K562 (cell line): ENCODE measurements at regions of chrX and their contacts with region 1.

Region 1: DNA sequence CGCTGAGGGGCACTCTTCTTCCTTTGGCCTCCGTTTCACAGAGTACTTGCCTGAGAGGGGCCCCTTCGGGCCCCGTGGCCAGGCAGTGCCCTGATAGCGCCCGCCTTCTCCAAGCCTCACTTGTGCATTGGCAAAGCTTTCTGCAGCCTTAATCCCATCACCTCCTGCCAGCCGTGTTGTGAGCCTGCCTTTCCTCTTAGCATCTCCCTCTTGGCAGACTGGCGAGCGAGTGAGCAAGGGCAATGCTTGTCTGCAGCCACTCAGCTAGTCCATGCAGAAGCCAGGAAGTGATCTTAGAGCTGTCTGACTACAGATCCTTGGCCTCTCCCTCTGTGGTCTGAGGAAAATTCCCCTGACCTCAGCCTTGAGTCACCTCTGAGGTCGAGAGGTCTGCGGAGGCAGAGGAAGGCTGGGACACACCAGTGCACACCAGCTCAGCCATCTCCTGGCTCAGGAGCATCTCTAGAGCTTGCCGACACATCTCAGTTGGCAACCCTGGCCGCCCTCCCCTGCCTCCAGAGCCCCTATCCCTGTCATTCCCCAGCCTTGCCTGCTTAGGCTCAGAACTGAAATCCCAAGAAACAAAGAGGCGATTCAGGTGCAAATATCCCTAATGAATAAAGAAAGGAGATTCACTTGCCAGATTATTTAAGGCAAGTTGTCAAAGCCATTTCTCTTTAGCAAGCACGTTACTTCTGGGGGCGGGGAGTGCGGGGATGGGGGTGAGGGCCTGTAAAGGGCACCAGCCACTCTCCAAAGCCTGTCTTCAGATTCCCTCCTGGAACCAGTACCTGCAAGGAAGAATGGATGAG is 143.5 kb upstream of the MAMLD1 start:
- DNase-seq: no peak
- ATAC-seq: no peak
- H3K4me3 ChIP-seq: no peak overlapping the region
- H3K27ac ChIP-seq: no peak overlapping the region
- H3K4me1 ChIP-seq: no peaks in the 10 kb centered on the region
- H3K27me3 ChIP-seq: peaks cover 0 to 32% of the 10 kb centered on the region in 2 experiments; a peak in 2 of 5 replicates
- CTCF ChIP-seq: no peak
- EP300 ChIP-seq: no peak
- POLR2A ChIP-seq: no peak
- RAD21 ChIP-seq: no peak

Region 2: DNA sequence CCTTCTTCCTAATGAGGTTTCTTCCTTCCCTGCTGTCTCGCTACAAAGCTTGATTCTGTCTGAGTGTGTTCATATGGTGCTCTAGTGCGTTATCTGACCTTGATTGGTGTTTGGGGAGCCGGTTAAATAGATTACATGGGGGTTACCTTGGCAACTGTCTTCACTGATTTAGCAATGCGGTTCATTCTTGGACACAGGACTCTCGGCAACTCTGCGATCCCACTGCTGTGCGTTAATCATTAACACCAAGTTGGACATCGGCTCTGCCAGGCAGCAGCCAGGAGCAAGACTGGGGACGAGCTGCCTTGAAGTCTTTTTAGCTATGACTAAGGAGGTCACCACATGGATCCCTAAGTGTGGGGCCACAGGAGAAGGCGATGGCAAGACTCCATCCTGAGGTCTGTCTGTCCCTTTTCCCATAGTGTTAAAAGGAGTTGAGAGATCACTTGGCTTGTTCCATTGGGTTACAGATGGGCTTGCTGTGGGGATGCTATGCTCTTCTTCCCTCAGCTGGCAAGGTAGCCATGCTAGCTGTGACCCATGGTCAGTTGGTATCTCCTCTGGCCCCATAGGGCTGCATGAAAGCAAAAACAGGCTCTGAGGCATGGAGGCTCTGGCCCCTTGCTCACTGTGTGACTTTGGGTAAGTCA is 50.1 kb after region 1 on chrX:
- CTCF ChIA-PET with region 1: no interaction called
- POLR2A ChIA-PET with region 1: no interaction called
- in situ Hi-C with region 1: no loop called
- intact Hi-C with region 1: no loop called
- DNase-seq: no peak
- ATAC-seq: no peak
- H3K4me3 ChIP-seq: no peak overlapping the region
- H3K27ac ChIP-seq: no peak overlapping the region
- H3K4me1 ChIP-seq: no peaks in the 10 kb centered on the region
- H3K27me3 ChIP-seq: peaks cover 0 to 6% of the 10 kb centered on the region in 2 experiments; a peak in 1 of 5 replicates
- CTCF ChIP-seq: no peak
- EP300 ChIP-seq: no peak
- POLR2A ChIP-seq: no peak
- RAD21 ChIP-seq: no peak

Region 3: DNA sequence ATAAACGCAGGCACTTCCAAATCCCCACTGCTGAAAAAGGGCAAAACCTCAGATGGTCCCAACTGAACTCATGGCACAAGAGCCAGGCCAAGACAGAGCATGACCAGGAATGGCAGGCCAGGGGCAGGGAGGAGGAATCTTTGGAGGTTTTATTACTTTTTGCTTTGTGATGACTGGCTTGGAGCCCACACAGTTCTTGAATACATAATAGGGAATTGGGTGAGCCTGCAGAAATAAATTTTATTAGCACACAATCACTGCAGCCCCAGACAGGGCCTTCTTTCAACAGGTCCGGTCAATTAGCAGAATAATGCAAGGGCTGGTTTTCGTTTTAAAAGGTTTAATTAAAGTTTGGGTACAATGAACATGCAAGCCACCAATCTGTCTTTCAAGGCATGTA is 120.2 kb after region 1 on chrX:
- CTCF ChIA-PET with region 1: no interaction called
- POLR2A ChIA-PET with region 1: interaction called, 3 read pairs
- in situ Hi-C with region 1: loop called (anchors 5 kb)
- intact Hi-C with region 1: no loop called
- DNase-seq: no peak
- ATAC-seq: no peak
- H3K4me3 ChIP-seq: no peak overlapping the region
- H3K27ac ChIP-seq: no peak overlapping the region
- H3K4me1 ChIP-seq: no peaks in the 10 kb centered on the region
- H3K27me3 ChIP-seq: no peaks in the 10 kb centered on the region
- CTCF ChIP-seq: no peak
- EP300 ChIP-seq: no peak
- POLR2A ChIP-seq: no peak
- RAD21 ChIP-seq: no peak